ENCODE measurements at regions of chr2 and their contacts with region 1.

Region 1: GRCh38 chr2:179222076-179222475 is 42.6 kb downstream of the SESTD1 start:
- DNase-seq: no peak
- H3K4me3 ChIP-seq: no peak overlapping the region
- H3K27ac ChIP-seq: no peak overlapping the region
- H3K4me1 ChIP-seq: no peaks in the 10 kb centered on the region
- CTCF ChIP-seq: no peak

Region 2: GRCh38 chr2:179340668-179341067 is 118.6 kb after region 1 on chr2:
- CTCF ChIA-PET with region 1: interaction called, 3 read pairs
- POLR2A ChIA-PET with region 1: no interaction called
- intact Hi-C with region 1: loop called (anchors 5 kb)
- DNase-seq: no peak
- H3K4me3 ChIP-seq: no peak overlapping the region
- H3K27ac ChIP-seq: no peak overlapping the region
- H3K4me1 ChIP-seq: no peaks in the 10 kb centered on the region
- CTCF ChIP-seq: peak; percentile 41

Measured in OCI-LY7 (cell line).